Right cardiac atrium (tissue), 5 donors: ENCODE measurements at regions of chr5 and their contacts with region 1.

Region 1: GRCh38 chr5:32709781-32710549 is 1.2 kb upstream of the NPR3 start:
- DNase-seq: peak; percentile 76 to 90 (median 88)
- ATAC-seq: peak; percentile 66 to 68
- H3K4me3 ChIP-seq: peak overlapping the region; percentile 66
- H3K27ac ChIP-seq: peak overlapping the region; percentile 49
- H3K4me1 ChIP-seq: no peaks in the 10 kb centered on the region
- H3K27me3 ChIP-seq: no peaks in the 10 kb centered on the region

Region 2: DNA sequence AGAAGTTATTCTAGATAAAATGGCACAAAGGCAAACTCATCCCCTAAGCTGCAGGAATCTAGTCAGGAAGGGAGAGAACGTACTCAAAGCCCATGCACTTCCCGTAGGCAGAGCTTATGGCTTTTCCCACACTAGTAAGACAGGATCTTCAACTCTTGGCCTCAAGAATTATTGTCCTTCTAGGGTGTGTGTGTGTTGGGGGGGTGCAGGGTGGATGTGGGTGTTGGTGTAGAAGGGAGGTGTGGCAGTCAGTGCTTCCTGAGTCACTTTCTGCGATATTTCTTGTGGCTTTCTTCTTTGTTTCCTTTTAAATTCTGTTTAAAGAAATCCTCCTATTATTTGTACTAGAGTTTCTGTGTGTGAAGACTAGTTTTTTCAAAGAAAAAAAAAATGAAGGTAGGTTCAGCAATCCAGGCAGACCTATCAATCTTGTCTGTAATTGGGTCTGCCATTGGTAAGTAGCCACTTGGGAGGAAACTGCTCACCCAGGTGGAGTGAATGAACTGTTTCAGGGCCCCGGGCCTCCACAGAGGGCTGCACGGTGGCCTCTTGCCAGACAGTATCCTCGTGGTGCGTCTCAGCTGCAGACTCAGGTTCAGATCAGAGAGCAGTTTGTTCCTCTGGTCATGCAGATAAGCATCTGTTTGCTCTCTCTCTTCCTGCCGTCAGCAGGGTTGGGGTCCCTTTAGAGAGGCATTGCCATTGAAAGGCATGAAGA is 133.0 kb after region 1 on chr5:
- intact Hi-C with region 1: loop called in 1 of 4 experiments (anchors 10 kb)
- DNase-seq: peak in 1 of 3 donors; percentile 27
- ATAC-seq: peak; percentile 79 to 98
- H3K4me3 ChIP-seq: no peak overlapping the region
- H3K27ac ChIP-seq: no peak overlapping the region
- H3K4me1 ChIP-seq: no peaks in the 10 kb centered on the region
- H3K27me3 ChIP-seq: no peaks in the 10 kb centered on the region

Region 3: DNA sequence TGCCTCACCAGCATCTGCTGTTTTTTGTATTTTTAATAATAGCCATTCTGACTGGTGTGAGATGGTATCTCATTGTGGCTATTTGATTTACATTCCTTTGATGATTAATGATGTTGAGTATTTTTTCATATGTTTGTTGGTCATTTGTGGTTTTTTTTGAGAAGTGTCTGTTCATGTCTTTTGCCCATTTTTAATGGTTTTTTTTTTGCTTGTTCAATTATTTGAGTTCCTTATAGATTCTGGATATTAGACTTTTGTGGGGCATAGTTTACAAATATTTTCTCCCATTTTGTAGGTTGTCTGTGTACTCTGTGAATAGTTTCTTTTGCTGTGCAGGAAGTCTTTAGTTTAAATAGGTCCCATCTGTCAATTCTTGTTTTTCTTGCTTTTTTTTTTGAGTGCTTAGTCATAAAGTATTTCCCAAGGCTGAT is 149.3 kb after region 1 on chr5:
- intact Hi-C with region 1: no loop called
- DNase-seq: no peak
- ATAC-seq: no peak
- H3K4me3 ChIP-seq: no peak overlapping the region
- H3K27ac ChIP-seq: no peak overlapping the region
- H3K4me1 ChIP-seq: no peaks in the 10 kb centered on the region
- H3K27me3 ChIP-seq: no peaks in the 10 kb centered on the region

Region 4: GRCh38 chr5:33423018-33423630 is 713.2 kb after region 1 on chr5:
- intact Hi-C with region 1: loop called in 1 of 4 experiments (anchors 10 kb)
- DNase-seq: no peak
- ATAC-seq: peak in 1 of 2 donors; percentile 44
- H3K4me3 ChIP-seq: no peak overlapping the region
- H3K27ac ChIP-seq: no peak overlapping the region
- H3K4me1 ChIP-seq: no peaks in the 10 kb centered on the region
- H3K27me3 ChIP-seq: no peaks in the 10 kb centered on the region